Right ventricle myocardium inferior (tissue), 1 donor: ENCODE measurements at regions of chr19 and their contacts with region 1.

Region 1: GRCh38 chr19:56080669-56081401 is 40.3 kb downstream of the ZNF787 start:
- DNase-seq: peak; percentile 92
- ATAC-seq: peak; percentile 82

Region 2: DNA sequence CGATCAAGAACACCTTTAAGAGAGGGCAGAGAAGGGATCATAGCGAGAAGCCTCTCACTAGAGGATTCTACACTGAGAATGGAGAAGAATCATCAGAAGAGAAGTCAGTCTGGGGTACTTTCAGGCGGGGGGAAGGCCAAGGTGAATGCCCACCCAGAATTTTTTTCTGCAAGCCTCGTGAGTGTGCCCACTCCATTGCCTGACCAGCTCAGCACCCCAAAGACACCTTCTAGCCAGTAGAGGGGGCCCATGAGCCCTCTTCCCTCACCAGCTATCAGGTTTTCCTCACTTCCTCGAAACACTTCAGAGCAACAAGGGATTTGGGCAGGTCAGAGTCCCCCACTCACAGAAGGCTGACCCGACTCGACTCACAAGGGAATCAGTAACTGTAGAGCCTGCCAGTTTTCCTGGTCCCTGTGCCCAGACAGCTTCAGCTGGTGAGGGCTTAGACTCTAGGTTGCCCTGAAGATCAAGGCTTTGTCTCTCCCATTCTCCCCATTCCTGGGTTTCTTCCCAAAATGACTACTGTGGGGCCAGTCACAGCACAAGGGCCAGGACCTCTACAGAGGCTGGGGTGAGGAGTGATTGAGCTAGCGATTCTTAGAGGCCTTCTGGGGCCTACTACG is 167.1 kb before region 1 on chr19:
- intact Hi-C with region 1: no loop called
- DNase-seq: no peak
- ATAC-seq: no peak

Region 3: GRCh38 chr19:56121180-56122167 is 40.6 kb after region 1 on chr19 and contains the start of gene ZNF787:
- intact Hi-C with region 1: loop called (anchors 5 kb)
- DNase-seq: peak; percentile 99
- ATAC-seq: peak; percentile 94
- total RNA-seq, gene ZNF787: 35.3 TPM

Region 4: DNA sequence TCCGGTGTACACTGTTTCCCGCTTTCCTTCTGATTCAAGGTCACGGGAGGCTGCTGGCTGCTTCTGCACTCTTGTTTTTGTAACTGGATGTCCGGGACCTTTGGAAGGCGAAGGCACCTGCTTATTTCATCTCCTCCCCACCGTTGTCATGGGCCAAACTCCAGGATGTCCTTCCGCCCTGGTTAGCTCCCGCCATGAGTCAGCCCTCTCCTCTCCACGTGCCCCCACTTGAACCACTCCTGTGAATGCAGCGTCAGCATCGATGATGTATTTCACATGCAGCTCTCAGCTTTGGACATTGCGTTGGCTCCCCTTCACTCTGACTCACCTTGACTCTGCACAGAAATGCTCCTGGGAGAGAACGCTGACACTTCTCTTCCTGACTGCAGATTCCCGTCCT is 89.4 kb after region 1 on chr19:
- intact Hi-C with region 1: loop called (anchors 1 kb)
- DNase-seq: no peak
- ATAC-seq: no peak

Region 5: DNA sequence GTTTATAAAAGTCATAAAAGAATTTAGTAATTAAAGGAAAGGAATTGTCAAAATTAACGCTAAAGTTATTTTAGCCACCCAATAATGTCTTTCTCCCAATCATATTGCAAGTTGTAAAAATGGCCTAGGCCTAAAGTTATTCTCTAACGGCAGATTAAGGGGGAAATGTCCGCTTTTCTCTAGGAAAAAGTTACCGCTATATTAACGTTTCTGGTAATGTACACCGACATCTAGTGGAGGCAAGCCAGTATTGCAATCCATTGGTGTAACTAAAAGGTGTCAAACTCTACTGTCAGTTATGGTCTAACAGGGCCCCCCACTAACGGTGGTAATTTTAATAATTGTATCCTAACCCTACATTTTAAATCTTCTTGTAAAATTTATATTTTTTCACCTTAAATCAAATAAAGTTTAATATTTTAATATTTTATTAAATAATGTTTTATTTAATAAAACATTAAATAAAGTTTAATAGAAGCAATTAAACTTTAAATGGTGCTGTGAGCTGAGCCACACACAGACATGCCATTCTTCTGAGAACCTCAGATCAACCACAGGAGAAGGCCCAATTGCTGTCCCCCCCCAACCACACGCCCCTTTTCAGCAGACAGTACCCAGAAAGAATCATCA is 269.7 kb after region 1 on chr19:
- intact Hi-C with region 1: loop called (anchors 5 kb)
- DNase-seq: no peak
- ATAC-seq: no peak